ENCODE measurements at regions of chr7 and their contacts with region 1.

Region 1: DNA sequence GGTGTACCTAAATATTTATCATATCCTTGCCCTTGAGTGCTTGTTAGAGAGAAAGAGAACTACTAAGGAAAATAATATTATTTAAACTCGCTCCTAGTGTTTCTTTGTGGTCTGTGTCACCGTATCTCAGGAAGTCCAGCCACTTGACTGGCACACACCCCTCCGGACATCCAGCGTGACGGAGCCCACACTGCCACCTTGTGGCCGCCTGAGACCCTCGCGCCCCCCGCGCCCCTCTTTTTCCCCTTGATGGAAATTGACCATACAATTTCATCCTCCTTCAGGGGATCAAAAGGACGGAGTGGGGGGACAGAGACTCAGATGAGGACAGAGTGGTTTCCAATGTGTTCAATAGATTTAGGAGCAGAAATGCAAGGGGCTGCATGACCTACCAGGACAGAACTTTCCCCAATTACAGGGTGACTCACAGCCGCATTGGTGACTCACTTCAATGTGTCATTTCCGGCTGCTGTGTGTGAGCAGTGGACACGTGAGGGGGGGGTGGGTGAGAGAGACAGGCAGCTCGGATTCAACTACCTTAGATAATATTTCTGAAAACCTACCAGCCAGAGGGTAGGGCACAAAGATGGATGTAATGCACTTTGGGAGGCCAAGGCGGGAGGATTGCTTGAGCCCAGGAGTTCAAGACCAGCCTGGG is 11.4 kb downstream of the SERPINE1 start:
- DNase-seq: peak in 3 of 9 donors; percentile 15 to 73 (median 70)
- ATAC-seq: peak; percentile 93
- H3K4me3 ChIP-seq: no peak overlapping the region
- H3K4me3 Mint-ChIP-seq: peak overlapping the region in 3 of 10 donors; percentile 46 to 70 (median 47)
- H3K27ac ChIP-seq: no peak overlapping the region
- H3K27ac Mint-ChIP-seq: peak overlapping the region in 3 of 9 donors; percentile 52 to 71 (median 62)
- H3K4me1 ChIP-seq: peaks cover 0 to 4% of the 10 kb centered on the region in 2 donors
- H3K4me1 Mint-ChIP-seq: peaks cover 0 to 30% (median 9%) of the 10 kb centered on the region in 7 donors
- H3K27me3 ChIP-seq: no peaks in the 10 kb centered on the region
- H3K27me3 Mint-ChIP-seq: peaks cover 4 to 44% (median 21%) of the 10 kb centered on the region in 5 donors

Region 2: GRCh38 chr7:100696123-100696521 is 442.2 kb before region 1 on chr7:
- CTCF ChIA-PET with region 1: no interaction called
- POLR2A ChIA-PET with region 1: no interaction called
- intact Hi-C with region 1: no loop called
- DNase-seq: no peak
- ATAC-seq: no peak
- H3K4me3 ChIP-seq: no peak overlapping the region
- H3K4me3 Mint-ChIP-seq: peak overlapping the region in 8 of 10 donors; percentile 28 to 88 (median 49)
- H3K27ac ChIP-seq: no peak overlapping the region
- H3K27ac Mint-ChIP-seq: peak overlapping the region in 5 of 9 donors; percentile 81 to 91 (median 84)
- H3K4me1 ChIP-seq: peaks cover 18 to 23% of the 10 kb centered on the region in 2 donors
- H3K4me1 Mint-ChIP-seq: peaks cover 20 to 33% (median 27%) of the 10 kb centered on the region in 7 donors
- H3K27me3 ChIP-seq: no peaks in the 10 kb centered on the region
- H3K27me3 Mint-ChIP-seq: peaks cover 0 to 38% (median 1%) of the 10 kb centered on the region in 5 donors

Region 3: DNA sequence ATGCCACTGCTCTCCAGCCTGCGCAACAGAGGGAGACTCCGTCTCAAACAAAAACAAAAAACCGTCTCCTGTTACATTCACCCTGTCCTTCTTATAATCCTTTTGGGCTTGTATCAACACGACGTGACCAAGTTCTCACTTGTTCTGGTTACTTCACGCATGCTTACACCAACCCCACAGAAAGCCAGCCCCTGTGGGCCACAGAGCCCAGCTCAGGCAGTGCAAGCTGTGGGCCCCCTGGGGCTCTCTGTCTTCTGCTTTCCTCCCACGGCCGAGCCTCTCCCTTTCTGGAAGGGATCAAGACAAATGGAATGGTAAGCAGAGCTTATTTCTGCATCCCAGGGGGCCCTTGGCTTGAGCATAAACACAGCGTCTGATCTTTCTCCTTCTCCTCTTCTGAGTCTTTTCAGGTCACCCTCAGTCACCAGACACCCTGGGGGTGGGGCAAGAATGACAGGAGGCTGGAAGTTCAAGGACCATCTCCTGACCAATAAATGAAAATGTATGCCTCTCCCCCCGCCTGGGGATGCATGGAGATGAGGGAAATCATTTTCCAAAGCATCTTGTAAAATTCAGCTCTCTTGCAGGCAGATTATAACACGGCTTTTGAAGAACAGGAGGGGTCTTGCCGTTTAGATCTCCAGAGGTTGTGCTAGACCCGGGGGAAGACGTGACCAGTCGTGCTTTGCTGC is 72.1 kb before region 1 on chr7:
- CTCF ChIA-PET with region 1: no interaction called
- POLR2A ChIA-PET with region 1: no interaction called
- intact Hi-C with region 1: no loop called
- DNase-seq: no peak
- ATAC-seq: no peak
- H3K4me3 ChIP-seq: no peak overlapping the region
- H3K4me3 Mint-ChIP-seq: no peak overlapping the region
- H3K27ac ChIP-seq: no peak overlapping the region
- H3K27ac Mint-ChIP-seq: no peak overlapping the region
- H3K4me1 ChIP-seq: no peaks in the 10 kb centered on the region
- H3K4me1 Mint-ChIP-seq: no peaks in the 10 kb centered on the region
- H3K27me3 ChIP-seq: no peaks in the 10 kb centered on the region
- H3K27me3 Mint-ChIP-seq: peaks cover 15 to 55% (median 40%) of the 10 kb centered on the region in 5 donors

Region 4: GRCh38 chr7:101085162-101085987 is 53.0 kb before region 1 on chr7 and contains the start of gene TRIM56:
- CTCF ChIA-PET with region 1: no interaction called
- POLR2A ChIA-PET with region 1: no interaction called
- intact Hi-C with region 1: loop called in 1 of 2 experiments (anchors 5 kb)
- DNase-seq: peak; percentile 53 to 77 (median 74)
- ATAC-seq: peak; percentile 94
- H3K4me3 ChIP-seq: peak within 1 kb of the TSS; percentile 100
- H3K4me3 Mint-ChIP-seq: peak within 1 kb of the TSS; percentile 91 to 100 (median 98)
- H3K27ac ChIP-seq: peak within 1 kb of the TSS; percentile 97
- H3K27ac Mint-ChIP-seq: peak within 1 kb of the TSS; percentile 93 to 100 (median 99)
- H3K4me1 ChIP-seq: peaks cover 10 to 15% of the 10 kb centered on the region in 2 donors
- H3K4me1 Mint-ChIP-seq: peaks cover 14 to 43% (median 28%) of the 10 kb centered on the region in 7 donors
- H3K27me3 ChIP-seq: no peaks in the 10 kb centered on the region
- H3K27me3 Mint-ChIP-seq: peaks cover 0 to 6% (median 0%) of the 10 kb centered on the region in 5 donors
- total RNA-seq, gene TRIM56: 49.6 to 72.3 (median 68.0) TPM

Region 5: GRCh38 chr7:101099969-101100781 is 38.2 kb before region 1 on chr7:
- CTCF ChIA-PET with region 1: no interaction called
- POLR2A ChIA-PET with region 1: no interaction called
- intact Hi-C with region 1: loop called in 1 of 2 experiments (anchors 5 kb)
- DNase-seq: peak in 1 of 9 donors; percentile 55
- ATAC-seq: peak; percentile 81
- H3K4me3 ChIP-seq: no peak overlapping the region
- H3K4me3 Mint-ChIP-seq: no peak overlapping the region
- H3K27ac ChIP-seq: no peak overlapping the region
- H3K27ac Mint-ChIP-seq: no peak overlapping the region
- H3K4me1 ChIP-seq: no peaks in the 10 kb centered on the region
- H3K4me1 Mint-ChIP-seq: peaks cover 9 to 22% (median 13%) of the 10 kb centered on the region in 7 donors
- H3K27me3 ChIP-seq: no peaks in the 10 kb centered on the region
- H3K27me3 Mint-ChIP-seq: peaks cover 22 to 34% (median 33%) of the 10 kb centered on the region in 5 donors

Region 6: DNA sequence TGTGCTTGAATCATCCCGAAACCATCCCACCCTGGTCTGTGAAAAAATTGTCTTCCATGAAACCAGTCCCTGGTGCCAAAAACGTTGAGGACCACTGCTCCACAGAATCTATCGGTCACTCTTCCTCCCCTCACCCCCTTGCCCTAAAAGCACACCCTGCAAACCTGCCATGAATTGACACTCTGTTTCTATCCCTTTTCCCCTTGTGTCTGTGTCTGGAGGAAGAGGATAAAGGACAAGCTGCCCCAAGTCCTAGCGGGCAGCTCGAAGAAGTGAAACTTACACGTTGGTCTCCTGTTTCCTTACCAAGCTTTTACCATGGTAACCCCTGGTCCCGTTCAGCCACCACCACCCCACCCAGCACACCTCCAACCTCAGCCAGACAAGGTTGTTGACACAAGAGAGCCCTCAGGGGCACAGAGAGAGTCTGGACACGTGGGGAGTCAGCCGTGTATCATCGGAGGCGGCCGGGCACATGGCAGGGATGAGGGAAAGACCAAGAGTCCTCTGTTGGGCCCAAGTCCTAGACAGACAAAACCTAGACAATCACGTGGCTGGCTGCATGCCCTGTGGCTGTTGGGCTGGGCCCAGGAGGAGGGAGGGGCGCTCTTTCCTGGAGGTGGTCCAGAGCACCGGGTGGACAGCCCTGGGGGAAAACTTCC is 12.2 kb before region 1 on chr7:
- CTCF ChIA-PET with region 1: interaction called, 4 read pairs
- POLR2A ChIA-PET with region 1: no interaction called
- intact Hi-C with region 1: loop called in 1 of 2 experiments (anchors 2 kb)
- DNase-seq: no peak
- ATAC-seq: peak; percentile 63
- H3K4me3 ChIP-seq: no peak overlapping the region
- H3K4me3 Mint-ChIP-seq: peak overlapping the region in 5 of 10 donors; percentile 4 to 84 (median 56)
- H3K27ac ChIP-seq: no peak overlapping the region
- H3K27ac Mint-ChIP-seq: peak overlapping the region in 1 of 9 donors; percentile 39
- H3K4me1 ChIP-seq: peaks cover 6 to 15% of the 10 kb centered on the region in 2 donors
- H3K4me1 Mint-ChIP-seq: peaks cover 23 to 53% (median 30%) of the 10 kb centered on the region in 7 donors
- H3K27me3 ChIP-seq: no peaks in the 10 kb centered on the region
- H3K27me3 Mint-ChIP-seq: peaks cover 56 to 66% (median 58%) of the 10 kb centered on the region in 5 donors

Region 7: GRCh38 chr7:101165075-101165957 is 27.0 kb after region 1 on chr7 and contains the start of gene VGF:
- CTCF ChIA-PET with region 1: interaction called, 31 read pairs
- POLR2A ChIA-PET with region 1: no interaction called
- intact Hi-C with region 1: no loop called
- DNase-seq: peak; percentile 84 to 97 (median 90)
- ATAC-seq: peak; percentile 93
- H3K4me3 ChIP-seq: peak within 1 kb of the TSS; percentile 10
- H3K4me3 Mint-ChIP-seq: peak within 1 kb of the TSS; percentile 58 to 92 (median 77)
- H3K27ac ChIP-seq: no peak within 1 kb of the TSS
- H3K27ac Mint-ChIP-seq: peak within 1 kb of the TSS; percentile 4 to 87 (median 73)
- H3K4me1 ChIP-seq: peaks cover 34 to 40% of the 10 kb centered on the region in 2 donors
- H3K4me1 Mint-ChIP-seq: peaks cover 39 to 56% (median 46%) of the 10 kb centered on the region in 7 donors
- H3K27me3 ChIP-seq: peaks cover 20 to 46% of the 10 kb centered on the region in 2 donors
- H3K27me3 Mint-ChIP-seq: peaks cover 55 to 70% (median 62%) of the 10 kb centered on the region in 5 donors
- total RNA-seq, gene VGF: 0.19 TPM in 1 of 5 experiments, not detected in the others

Region 8: GRCh38 chr7:101186844-101187428 is 48.6 kb after region 1 on chr7:
- CTCF ChIA-PET with region 1: interaction called, 50 read pairs
- POLR2A ChIA-PET with region 1: no interaction called
- intact Hi-C with region 1: no loop called
- DNase-seq: no peak
- ATAC-seq: no peak
- H3K4me3 ChIP-seq: no peak overlapping the region
- H3K4me3 Mint-ChIP-seq: no peak overlapping the region
- H3K27ac ChIP-seq: no peak overlapping the region
- H3K27ac Mint-ChIP-seq: no peak overlapping the region
- H3K4me1 ChIP-seq: no peaks in the 10 kb centered on the region
- H3K4me1 Mint-ChIP-seq: peaks cover 0 to 7% (median 4%) of the 10 kb centered on the region in 7 donors
- H3K27me3 ChIP-seq: no peaks in the 10 kb centered on the region
- H3K27me3 Mint-ChIP-seq: peaks cover 20 to 32% (median 23%) of the 10 kb centered on the region in 5 donors

Region 9: GRCh38 chr7:101287032-101287431 is 148.7 kb after region 1 on chr7:
- CTCF ChIA-PET with region 1: interaction called, 68 read pairs
- POLR2A ChIA-PET with region 1: no interaction called
- intact Hi-C with region 1: no loop called
- DNase-seq: no peak
- ATAC-seq: no peak
- H3K4me3 ChIP-seq: no peak overlapping the region
- H3K4me3 Mint-ChIP-seq: no peak overlapping the region
- H3K27ac ChIP-seq: no peak overlapping the region
- H3K27ac Mint-ChIP-seq: no peak overlapping the region
- H3K4me1 ChIP-seq: no peaks in the 10 kb centered on the region
- H3K4me1 Mint-ChIP-seq: peaks cover 3 to 17% (median 5%) of the 10 kb centered on the region in 7 donors
- H3K27me3 ChIP-seq: no peaks in the 10 kb centered on the region
- H3K27me3 Mint-ChIP-seq: peaks cover 6 to 21% (median 9%) of the 10 kb centered on the region in 5 donors

Region 10: GRCh38 chr7:101436857-101437576 is 298.7 kb after region 1 on chr7:
- CTCF ChIA-PET with region 1: no interaction called
- POLR2A ChIA-PET with region 1: no interaction called
- intact Hi-C with region 1: no loop called
- DNase-seq: no peak
- ATAC-seq: no peak
- H3K4me3 ChIP-seq: no peak overlapping the region
- H3K4me3 Mint-ChIP-seq: no peak overlapping the region
- H3K27ac ChIP-seq: no peak overlapping the region
- H3K27ac Mint-ChIP-seq: no peak overlapping the region
- H3K4me1 ChIP-seq: no peaks in the 10 kb centered on the region
- H3K4me1 Mint-ChIP-seq: peaks cover 0 to 6% (median 0%) of the 10 kb centered on the region in 7 donors
- H3K27me3 ChIP-seq: no peaks in the 10 kb centered on the region
- H3K27me3 Mint-ChIP-seq: peaks cover 3 to 38% (median 24%) of the 10 kb centered on the region in 5 donors

Measured in naive thymus-derived CD4-positive, alpha-beta T cell (primary cell).